Caco-2 (cell line): ENCODE measurements at regions of chr7 and their contacts with region 1.

Region 1: DNA sequence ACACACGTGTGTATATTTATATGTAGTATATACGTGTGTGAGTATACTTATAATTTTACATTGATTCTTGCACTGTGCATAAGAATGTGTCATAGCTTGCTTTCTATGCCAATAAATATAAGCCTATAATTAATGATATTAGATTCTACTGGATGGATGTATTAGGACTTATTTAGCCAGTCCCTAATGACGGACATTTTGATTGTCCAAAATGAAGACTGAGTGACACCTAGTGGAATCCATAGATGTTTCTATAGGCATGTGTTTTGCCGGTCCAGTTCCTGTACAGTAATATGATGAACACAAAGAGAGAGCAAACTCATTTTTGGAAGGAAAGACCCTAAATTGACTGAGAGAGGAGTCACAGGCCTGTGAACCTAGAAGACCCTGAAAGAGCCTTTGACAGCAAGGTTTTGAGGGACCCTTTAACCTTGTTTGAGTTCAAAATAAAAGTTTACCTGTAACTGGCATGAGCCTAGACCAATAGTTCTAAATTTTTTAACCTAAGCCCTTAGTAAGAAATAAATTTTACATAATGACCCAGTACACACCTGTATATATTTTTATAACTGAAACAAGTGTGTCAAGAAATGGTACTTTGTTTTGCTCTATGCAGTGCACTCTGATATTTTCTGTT is 42.4 kb upstream of the AGBL3 start:
- DNase-seq: peak in 1 of 2 experiments; percentile 53
- H3K4me3 ChIP-seq: no peak overlapping the region
- H3K4me3 Mint-ChIP-seq: no peak overlapping the region
- H3K27ac Mint-ChIP-seq: no peak overlapping the region
- H3K4me1 ChIP-seq: peaks cover 62% of the 10 kb centered on the region
- H3K4me1 Mint-ChIP-seq: peaks cover 69% of the 10 kb centered on the region
- H3K27me3 ChIP-seq: no peaks in the 10 kb centered on the region
- H3K27me3 Mint-ChIP-seq: no peaks in the 10 kb centered on the region
- CTCF ChIP-seq: peak; percentile 59 to 64

Region 2: GRCh38 chr7:134632937-134633540 is 310.8 kb before region 1 on chr7:
- CTCF ChIA-PET with region 1: interaction called, 3 read pairs
- POLR2A ChIA-PET with region 1: no interaction called
- intact Hi-C with region 1: loop called (anchors 1 kb)
- DNase-seq: peak in 1 of 2 experiments; percentile 49
- H3K4me3 ChIP-seq: no peak overlapping the region
- H3K4me3 Mint-ChIP-seq: no peak overlapping the region
- H3K27ac Mint-ChIP-seq: no peak overlapping the region
- H3K4me1 ChIP-seq: no peaks in the 10 kb centered on the region
- H3K4me1 Mint-ChIP-seq: no peaks in the 10 kb centered on the region
- H3K27me3 ChIP-seq: no peaks in the 10 kb centered on the region; the same call in 1 of the 2 replicates
- H3K27me3 Mint-ChIP-seq: peaks cover 6% of the 10 kb centered on the region
- CTCF ChIP-seq: peak; percentile 63 to 65

Region 3: DNA sequence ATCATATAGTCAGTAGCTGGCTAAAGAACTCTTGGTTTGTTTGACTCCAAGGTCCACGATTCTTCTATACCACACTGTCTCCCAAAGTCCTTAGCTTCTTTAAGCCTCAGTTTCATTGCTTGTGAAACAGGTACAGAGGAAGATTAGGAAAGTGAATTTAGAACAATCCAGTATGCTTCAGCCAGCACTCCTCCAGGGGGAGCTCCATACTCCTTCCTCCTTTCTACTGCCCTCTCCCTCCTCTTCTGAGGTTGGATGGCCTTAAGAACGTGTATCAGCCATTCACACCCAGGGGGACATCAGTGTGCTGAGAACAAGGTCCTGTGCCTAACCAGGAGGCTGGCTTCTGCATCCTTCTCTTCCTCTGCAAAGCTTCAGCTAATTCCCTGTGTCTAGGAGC is 219.3 kb before region 1 on chr7:
- CTCF ChIA-PET with region 1: interaction called, 3 read pairs
- POLR2A ChIA-PET with region 1: no interaction called
- intact Hi-C with region 1: loop called (anchors 1 kb)
- DNase-seq: peak; percentile 40 to 61
- H3K4me3 ChIP-seq: no peak overlapping the region
- H3K4me3 Mint-ChIP-seq: no peak overlapping the region
- H3K27ac Mint-ChIP-seq: no peak overlapping the region
- H3K4me1 ChIP-seq: 0 out of 2 replicates have a peak, but pooled peaks cover 5% of the 10 kb centered on the region
- H3K4me1 Mint-ChIP-seq: peaks cover 8% of the 10 kb centered on the region
- H3K27me3 ChIP-seq: no peaks in the 10 kb centered on the region
- H3K27me3 Mint-ChIP-seq: no peaks in the 10 kb centered on the region
- CTCF ChIP-seq: peak; percentile 61

Region 4: GRCh38 chr7:134778941-134779740 is 164.7 kb before region 1 on chr7 and contains the start of gene CALD1:
- CTCF ChIA-PET with region 1: no interaction called
- POLR2A ChIA-PET with region 1: no interaction called
- intact Hi-C with region 1: loop called (anchors 5 kb)
- DNase-seq: peak; percentile 92 to 96
- H3K4me3 ChIP-seq: peak within 1 kb of the TSS; percentile 22
- H3K4me3 Mint-ChIP-seq: peak within 1 kb of the TSS; percentile 79
- H3K27ac Mint-ChIP-seq: peak within 1 kb of the TSS; percentile 79
- H3K4me1 ChIP-seq: peaks cover 31% of the 10 kb centered on the region
- H3K4me1 Mint-ChIP-seq: peaks cover 30% of the 10 kb centered on the region
- H3K27me3 ChIP-seq: no peaks in the 10 kb centered on the region
- H3K27me3 Mint-ChIP-seq: no peaks in the 10 kb centered on the region
- CTCF ChIP-seq: no peak
- total RNA-seq, gene CALD1: 140 and 155 TPM in 2 replicates

Region 5: GRCh38 chr7:134865001-134865845 is 78.7 kb before region 1 on chr7:
- CTCF ChIA-PET with region 1: no interaction called
- POLR2A ChIA-PET with region 1: no interaction called
- intact Hi-C with region 1: no loop called
- DNase-seq: no peak
- H3K4me3 ChIP-seq: no peak overlapping the region
- H3K4me3 Mint-ChIP-seq: no peak overlapping the region
- H3K27ac Mint-ChIP-seq: no peak overlapping the region
- H3K4me1 ChIP-seq: no peaks in the 10 kb centered on the region
- H3K4me1 Mint-ChIP-seq: no peaks in the 10 kb centered on the region
- H3K27me3 ChIP-seq: no peaks in the 10 kb centered on the region
- H3K27me3 Mint-ChIP-seq: no peaks in the 10 kb centered on the region
- CTCF ChIP-seq: no peak

Region 6: DNA sequence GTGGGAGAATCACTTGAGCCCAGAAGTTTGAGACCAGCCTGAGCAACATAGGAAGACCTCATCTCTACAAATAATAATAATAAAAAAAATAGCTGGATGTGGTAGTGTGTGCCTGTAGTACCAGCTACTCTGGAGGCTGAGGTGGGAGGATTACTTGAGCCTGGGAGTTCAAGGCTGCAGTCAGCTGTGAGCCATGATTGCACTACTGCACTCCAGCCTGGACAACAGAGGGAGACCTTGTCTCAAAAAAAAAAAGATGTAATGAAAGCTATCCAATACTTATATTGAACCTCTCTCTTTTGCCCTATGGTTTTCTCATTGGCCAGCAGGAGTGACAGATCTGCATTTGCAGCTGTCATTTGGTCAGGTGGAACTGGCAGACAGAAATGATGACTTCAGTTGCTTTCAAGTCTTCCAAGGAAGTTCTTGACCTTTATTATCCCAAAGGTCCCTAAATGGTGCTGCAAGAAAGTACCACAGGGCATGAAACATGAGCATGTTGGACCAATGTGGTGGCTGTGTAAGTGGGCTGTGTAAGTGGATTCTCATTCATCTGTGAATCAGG is 65.1 kb before region 1 on chr7:
- CTCF ChIA-PET with region 1: interaction called, 10 read pairs
- POLR2A ChIA-PET with region 1: no interaction called
- intact Hi-C with region 1: loop called (anchors 1 kb)
- DNase-seq: peak in 1 of 2 experiments; percentile 30
- H3K4me3 ChIP-seq: no peak overlapping the region
- H3K4me3 Mint-ChIP-seq: no peak overlapping the region
- H3K27ac Mint-ChIP-seq: no peak overlapping the region
- H3K4me1 ChIP-seq: peaks cover 51% of the 10 kb centered on the region
- H3K4me1 Mint-ChIP-seq: peaks cover 25% of the 10 kb centered on the region
- H3K27me3 ChIP-seq: no peaks in the 10 kb centered on the region; the same call in 1 of the 2 replicates
- H3K27me3 Mint-ChIP-seq: no peaks in the 10 kb centered on the region
- CTCF ChIP-seq: peak in 1 of 2 experiments; percentile 10

Region 7: DNA sequence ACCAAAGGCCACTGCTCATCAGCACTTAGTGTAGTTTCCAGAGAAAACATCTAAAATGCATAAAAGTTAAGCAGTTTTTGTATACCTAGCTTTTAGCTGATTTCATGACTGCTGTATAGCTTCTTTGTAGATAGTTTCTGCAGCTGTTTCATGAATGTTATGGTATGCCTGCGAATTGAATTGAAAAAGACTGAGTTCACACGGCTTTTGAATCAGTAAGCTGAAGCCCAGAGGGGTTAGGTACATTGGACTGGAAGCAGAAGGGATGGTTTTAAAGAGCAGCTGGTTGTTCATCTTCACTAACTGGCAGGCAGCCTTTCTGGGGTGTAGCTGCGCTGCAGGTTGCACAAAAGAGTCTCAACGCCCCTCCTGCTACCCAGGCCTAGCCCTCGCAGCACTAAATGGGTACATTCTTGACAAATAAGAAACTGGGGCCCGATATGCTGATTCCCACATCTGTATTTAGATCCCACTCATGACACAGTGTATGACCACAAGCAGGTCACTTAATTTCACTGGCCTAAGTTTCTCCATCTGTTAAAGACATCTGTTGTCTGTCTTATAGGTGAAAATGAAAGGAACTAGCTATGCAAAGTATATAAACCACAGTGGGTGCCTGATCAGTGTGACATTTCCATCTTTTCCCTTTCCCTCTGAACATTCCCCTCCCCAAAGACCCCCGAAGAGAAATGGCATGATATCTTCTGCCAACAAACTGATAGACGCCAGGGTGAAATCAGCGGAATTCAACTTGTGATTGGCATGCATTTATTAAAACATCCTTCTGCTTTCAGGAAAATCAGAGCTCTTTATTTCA is 43.5 kb before region 1 on chr7:
- CTCF ChIA-PET with region 1: no interaction called
- POLR2A ChIA-PET with region 1: no interaction called
- intact Hi-C with region 1: loop called (anchors 2 kb)
- DNase-seq: no peak
- H3K4me3 ChIP-seq: no peak overlapping the region
- H3K4me3 Mint-ChIP-seq: peak overlapping the region; percentile 56
- H3K27ac Mint-ChIP-seq: peak overlapping the region; percentile 87
- H3K4me1 ChIP-seq: peaks cover 57% of the 10 kb centered on the region
- H3K4me1 Mint-ChIP-seq: peaks cover 50% of the 10 kb centered on the region
- H3K27me3 ChIP-seq: no peaks in the 10 kb centered on the region
- H3K27me3 Mint-ChIP-seq: no peaks in the 10 kb centered on the region
- CTCF ChIP-seq: no peak

Region 8: DNA sequence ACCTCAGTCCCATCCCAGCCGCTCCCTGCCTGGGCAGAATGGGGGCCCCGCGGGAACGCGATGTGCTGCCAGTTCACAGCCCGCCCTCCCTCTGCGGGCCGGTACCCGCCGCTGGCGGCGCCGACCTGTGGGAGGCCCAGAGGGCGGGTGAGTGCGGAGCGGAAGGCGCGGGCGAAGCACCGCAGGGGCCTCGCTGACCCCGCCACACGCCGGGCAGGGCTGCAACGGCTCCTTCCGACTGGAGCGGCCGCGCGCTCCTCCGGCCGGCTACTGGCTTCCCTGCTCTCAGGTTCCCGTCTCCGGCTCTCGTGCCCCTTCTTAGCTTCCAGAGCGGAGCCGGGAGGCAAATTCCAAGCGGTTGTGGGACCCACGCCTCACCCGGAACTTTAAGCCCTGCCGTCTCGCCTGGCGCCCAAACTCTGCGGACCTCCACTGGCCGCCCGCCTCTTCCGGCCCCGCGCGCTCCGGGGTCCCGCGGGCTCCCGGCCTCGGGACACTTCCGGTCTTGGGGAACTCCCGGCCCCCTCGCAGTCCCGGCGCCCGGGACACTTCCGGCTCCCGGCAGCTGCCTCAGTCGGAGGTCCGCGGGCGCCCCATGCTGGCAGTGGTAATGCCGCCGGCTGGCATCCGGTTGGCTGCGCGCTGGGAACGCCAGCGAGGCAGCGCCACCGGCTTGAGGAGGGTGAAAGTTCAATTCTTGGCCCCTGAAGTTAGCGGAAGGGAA is 226.6 kb after region 1 on chr7 and contains the start of gene CYREN:
- CTCF ChIA-PET with region 1: interaction called, 3 read pairs
- POLR2A ChIA-PET with region 1: no interaction called
- intact Hi-C with region 1: loop called (anchors 2 kb)
- DNase-seq: peak; percentile 95 to 97
- H3K4me3 ChIP-seq: peak within 1 kb of the TSS; percentile 98
- H3K4me3 Mint-ChIP-seq: peak within 1 kb of the TSS; percentile 85
- H3K27ac Mint-ChIP-seq: peak within 1 kb of the TSS; percentile 94
- H3K4me1 ChIP-seq: peaks cover 12% of the 10 kb centered on the region; the same call in 1 of the 2 replicates
- H3K4me1 Mint-ChIP-seq: peaks cover 24% of the 10 kb centered on the region
- H3K27me3 ChIP-seq: no peaks in the 10 kb centered on the region
- H3K27me3 Mint-ChIP-seq: no peaks in the 10 kb centered on the region
- CTCF ChIP-seq: peak; percentile 59 to 84
- total RNA-seq, gene CYREN: 60.9 and 62.6 TPM in 2 replicates

Region 9: DNA sequence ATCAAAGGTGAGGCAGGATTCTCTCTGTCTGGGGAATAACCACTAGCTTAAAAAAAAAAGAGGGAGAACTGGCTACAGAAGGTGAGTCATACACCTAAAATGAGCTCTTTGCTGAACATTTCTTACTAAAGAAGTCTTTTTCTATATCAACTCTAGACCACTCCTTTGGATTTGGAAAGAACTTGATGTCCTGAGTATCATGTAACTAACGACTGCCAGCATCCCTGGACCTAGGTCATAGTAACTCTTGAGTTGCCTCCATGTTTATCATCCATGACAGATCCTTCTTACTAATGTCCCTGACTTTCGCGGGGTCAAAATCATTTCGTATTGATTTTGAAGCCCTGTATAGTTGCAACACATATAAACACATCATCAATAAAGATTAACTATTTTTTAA is 476.9 kb after region 1 on chr7:
- CTCF ChIA-PET with region 1: no interaction called
- POLR2A ChIA-PET with region 1: no interaction called
- intact Hi-C with region 1: no loop called
- DNase-seq: no peak
- H3K4me3 ChIP-seq: no peak overlapping the region
- H3K4me3 Mint-ChIP-seq: no peak overlapping the region
- H3K27ac Mint-ChIP-seq: no peak overlapping the region
- H3K4me1 ChIP-seq: no peaks in the 10 kb centered on the region
- H3K4me1 Mint-ChIP-seq: no peaks in the 10 kb centered on the region
- H3K27me3 ChIP-seq: no peaks in the 10 kb centered on the region
- H3K27me3 Mint-ChIP-seq: no peaks in the 10 kb centered on the region
- CTCF ChIP-seq: no peak